ENCODE measurements at regions of chr3 and their contacts with region 1.

Region 1: DNA sequence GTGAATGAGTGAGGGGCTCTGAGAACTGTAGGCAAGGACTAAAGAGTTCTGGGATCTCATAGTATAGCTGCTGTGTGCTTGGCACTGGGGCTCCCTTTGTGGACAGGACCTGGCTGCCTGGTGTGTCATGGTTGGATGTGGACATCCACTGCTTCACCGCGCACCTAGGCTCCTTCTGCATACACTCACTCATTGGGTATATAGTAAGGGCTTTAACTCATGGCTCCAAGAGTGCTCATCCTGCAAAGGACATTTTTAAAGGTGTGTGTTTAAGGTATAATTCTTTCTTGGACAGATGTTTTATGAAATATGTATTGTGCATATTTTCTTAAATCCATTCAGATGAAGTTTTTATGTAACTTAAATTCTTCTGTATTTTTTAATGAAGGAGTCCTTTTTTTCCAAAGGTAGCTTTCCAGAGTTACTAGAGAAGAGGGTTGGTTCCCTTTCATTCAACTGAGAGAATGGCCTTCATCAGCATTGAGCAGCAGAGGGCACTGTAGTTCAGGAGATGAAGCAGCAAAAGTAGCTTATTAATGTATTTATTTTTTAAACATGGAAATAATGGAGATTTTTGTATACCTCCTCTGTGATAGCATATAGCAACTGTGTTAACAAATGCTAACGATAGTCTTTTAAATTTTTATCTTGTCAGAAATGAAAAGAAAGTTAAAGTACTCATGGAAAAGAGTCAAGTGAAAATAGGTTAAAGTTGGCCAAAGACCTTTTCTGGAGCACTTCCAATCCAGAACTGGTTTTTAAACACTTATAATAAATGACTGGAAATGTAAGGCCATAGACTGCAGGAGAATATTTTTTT is 25.2 kb downstream of the OXNAD1 start:
- DNase-seq: peak; percentile 64 to 77 (median 71)
- H3K4me3 ChIP-seq: peak overlapping the region in 2 of 7 experiments; percentile 28 to 34
- H3K27ac ChIP-seq: no peak overlapping the region
- H3K4me1 ChIP-seq: peaks cover 17 to 57% (median 41%) of the 10 kb centered on the region in 4 experiments
- H3K27me3 ChIP-seq: no peaks in the 10 kb centered on the region

Region 2: DNA sequence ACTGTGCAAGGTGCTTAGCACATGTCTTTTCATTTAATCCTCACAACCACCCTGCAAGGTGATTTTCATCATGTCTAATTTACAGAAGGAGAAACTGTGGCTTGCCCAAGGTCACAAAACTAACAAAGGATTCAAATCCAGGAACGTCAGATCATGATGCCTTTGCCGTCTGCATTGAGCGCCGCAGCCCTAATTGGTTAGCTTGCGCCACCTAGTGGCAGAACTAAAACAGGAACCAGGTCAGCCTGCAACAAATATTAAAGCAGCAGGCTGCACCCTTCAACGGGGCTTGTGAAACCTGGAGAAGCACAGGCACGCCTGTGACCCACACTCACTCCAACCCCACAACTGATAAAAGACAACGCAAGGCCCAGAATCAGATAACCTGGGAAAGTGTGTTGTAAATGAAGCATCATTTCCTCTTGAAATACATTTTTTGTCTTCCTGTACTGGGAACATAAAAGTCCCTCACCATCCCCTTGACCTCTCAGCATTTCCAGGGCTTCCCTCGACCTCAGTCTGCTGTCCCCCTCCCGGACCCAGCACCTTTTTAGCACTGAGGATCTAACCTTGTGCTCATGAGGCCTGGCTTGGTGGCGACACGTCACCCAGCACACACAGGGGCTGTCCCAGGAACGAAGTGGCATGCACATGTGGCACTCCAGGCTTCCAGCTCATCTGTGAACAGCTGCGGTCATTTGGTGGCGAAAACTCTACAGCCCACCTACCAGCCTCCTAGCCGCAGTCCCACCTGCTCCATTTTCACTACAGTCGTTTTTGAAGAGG is 42.7 kb before region 1 on chr3:
- CTCF ChIA-PET with region 1: no interaction called
- POLR2A ChIA-PET with region 1: no interaction called
- DNase-seq: peak; percentile 82 to 92 (median 89)
- H3K4me3 ChIP-seq: no peak overlapping the region
- H3K27ac ChIP-seq: no peak overlapping the region
- H3K4me1 ChIP-seq: peaks cover 0 to 5% (median 0%) of the 10 kb centered on the region in 4 experiments
- H3K27me3 ChIP-seq: no peaks in the 10 kb centered on the region

Region 3: DNA sequence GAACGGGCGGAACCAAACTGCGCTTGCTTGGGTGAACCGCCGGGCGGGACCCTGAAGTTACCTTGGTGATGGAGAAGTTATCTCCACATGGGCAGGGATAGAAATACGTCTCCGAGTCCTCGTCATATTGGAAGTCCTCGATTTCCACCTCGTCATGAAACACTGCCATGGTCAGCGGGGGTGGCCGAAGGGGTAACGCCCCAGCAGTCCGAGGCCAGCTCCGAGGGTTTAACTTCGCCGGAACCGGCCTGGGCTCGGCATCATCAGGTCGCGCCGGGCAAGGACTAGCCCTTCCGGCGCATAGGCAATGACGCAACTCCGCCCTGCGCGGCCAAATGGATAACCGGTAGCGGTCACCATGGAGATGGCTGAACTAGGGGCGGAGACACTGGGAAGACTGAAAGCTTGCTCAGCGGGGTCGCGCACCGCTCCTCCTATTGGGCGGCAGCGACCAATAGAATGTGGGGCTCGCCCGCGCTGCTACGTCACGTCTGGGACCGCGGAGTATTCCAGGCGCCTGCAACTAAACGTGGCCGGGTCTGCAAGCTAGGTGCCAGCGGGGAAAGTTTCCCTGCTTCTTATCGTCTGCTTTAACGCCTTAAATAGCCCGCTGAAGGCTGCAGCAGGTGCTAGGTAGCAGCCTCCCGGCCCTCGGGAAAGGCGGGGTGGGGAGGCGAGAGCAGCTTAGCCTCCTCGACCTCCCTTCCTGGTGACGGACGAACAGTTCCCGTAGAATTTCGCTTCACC is 25.3 kb before region 1 on chr3 and contains the starts of genes DPH3 and OXNAD1:
- CTCF ChIA-PET with region 1: interaction called, 38 read pairs
- POLR2A ChIA-PET with region 1: interaction called, 3 read pairs
- DNase-seq: peak; percentile 100
- H3K4me3 ChIP-seq: peak within 1 kb of the TSS; percentile 84 to 99 (median 95)
- H3K27ac ChIP-seq: peak within 1 kb of the TSS; percentile 93 to 96
- H3K4me1 ChIP-seq: peaks cover 12 to 28% (median 23%) of the 10 kb centered on the region in 4 experiments
- H3K27me3 ChIP-seq: no peaks in the 10 kb centered on the region

Region 4: GRCh38 chr3:16311960-16312451 is 21.8 kb after region 1 on chr3:
- CTCF ChIA-PET with region 1: interaction called, 66 read pairs
- POLR2A ChIA-PET with region 1: no interaction called
- DNase-seq: peak; percentile 67 to 92 (median 86)
- H3K4me3 ChIP-seq: peak overlapping the region in 2 of 7 experiments; percentile 6 to 22
- H3K27ac ChIP-seq: peak overlapping the region; percentile 5 to 11
- H3K4me1 ChIP-seq: peaks cover 13 to 54% (median 47%) of the 10 kb centered on the region in 4 experiments
- H3K27me3 ChIP-seq: no peaks in the 10 kb centered on the region

Region 5: DNA sequence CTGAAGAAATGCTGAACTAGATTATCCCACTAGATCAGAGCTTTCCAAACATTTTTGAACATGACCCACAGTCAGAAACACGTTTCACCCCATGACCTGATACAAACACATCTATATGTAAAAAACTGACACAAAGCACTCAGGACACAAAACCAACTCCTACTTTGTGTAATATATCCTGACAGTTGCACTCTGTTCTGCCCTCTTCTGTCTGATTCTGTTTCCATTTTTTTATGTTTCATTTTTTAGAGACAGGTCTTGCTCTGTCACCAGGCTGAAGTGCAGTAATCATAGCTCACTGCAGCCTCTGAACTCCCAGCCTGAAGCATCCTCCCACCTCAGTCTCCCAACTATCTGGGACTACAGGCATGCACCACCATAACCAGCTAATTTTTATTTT is 239.0 kb after region 1 on chr3:
- CTCF ChIA-PET with region 1: interaction called, 38 read pairs
- POLR2A ChIA-PET with region 1: no interaction called
- DNase-seq: peak in 1 of 3 donors; percentile 36
- H3K4me3 ChIP-seq: no peak overlapping the region
- H3K27ac ChIP-seq: no peak overlapping the region
- H3K4me1 ChIP-seq: peaks cover 2 to 20% (median 11%) of the 10 kb centered on the region in 4 experiments
- H3K27me3 ChIP-seq: no peaks in the 10 kb centered on the region

Region 6: DNA sequence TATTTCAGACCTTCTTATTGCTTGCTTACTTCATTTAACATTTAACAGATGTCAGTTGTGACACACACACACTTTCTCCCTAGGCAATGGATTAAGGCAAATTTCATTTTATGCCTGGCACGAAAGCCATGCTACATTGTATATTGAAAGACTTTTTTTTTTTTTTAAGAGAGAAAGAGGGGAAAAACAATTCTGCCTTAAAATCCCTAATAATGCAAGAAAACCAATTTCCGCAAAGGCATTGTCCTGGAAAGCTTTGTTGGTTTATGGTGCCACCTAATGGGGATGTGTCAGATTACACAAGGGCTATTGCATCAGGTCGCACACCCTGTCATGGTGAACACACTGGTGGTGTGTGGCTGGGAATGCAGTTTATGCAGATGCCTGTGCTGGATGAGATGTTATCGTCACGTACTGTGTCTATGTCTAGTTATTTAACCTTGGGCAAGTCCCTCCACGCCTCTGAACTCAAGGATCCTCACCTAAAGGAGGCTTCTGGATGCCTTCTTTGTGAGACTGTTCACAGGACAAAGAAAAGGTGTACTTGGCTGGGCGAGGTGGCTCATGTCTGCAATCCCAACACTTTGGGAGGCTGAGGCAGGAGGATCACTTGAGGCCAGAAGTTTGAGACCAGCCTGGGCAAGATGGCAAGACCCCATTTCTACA is 260.6 kb after region 1 on chr3:
- CTCF ChIA-PET with region 1: interaction called, 39 read pairs
- POLR2A ChIA-PET with region 1: no interaction called
- DNase-seq: peak; percentile 83 to 93 (median 92)
- H3K4me3 ChIP-seq: no peak overlapping the region
- H3K27ac ChIP-seq: no peak overlapping the region
- H3K4me1 ChIP-seq: peaks cover 0 to 10% (median 5%) of the 10 kb centered on the region in 4 experiments
- H3K27me3 ChIP-seq: no peaks in the 10 kb centered on the region